Activated naive CD4-positive, alpha-beta T cell treated with anti-CD3 and anti-CD28 coated beads for 36 hours (primary cell): ENCODE measurements at regions of chr12 and their contacts with region 1.

Region 1: GRCh38 chr12:47021298-47021697 is 58.1 kb upstream of the PCED1B start:
- DNase-seq: no peak
- H3K4me3 Mint-ChIP-seq: no peak overlapping the region
- H3K27ac Mint-ChIP-seq: no peak overlapping the region
- H3K4me1 Mint-ChIP-seq: no peaks in the 10 kb centered on the region
- H3K27me3 Mint-ChIP-seq: no peaks in the 10 kb centered on the region

Region 2: DNA sequence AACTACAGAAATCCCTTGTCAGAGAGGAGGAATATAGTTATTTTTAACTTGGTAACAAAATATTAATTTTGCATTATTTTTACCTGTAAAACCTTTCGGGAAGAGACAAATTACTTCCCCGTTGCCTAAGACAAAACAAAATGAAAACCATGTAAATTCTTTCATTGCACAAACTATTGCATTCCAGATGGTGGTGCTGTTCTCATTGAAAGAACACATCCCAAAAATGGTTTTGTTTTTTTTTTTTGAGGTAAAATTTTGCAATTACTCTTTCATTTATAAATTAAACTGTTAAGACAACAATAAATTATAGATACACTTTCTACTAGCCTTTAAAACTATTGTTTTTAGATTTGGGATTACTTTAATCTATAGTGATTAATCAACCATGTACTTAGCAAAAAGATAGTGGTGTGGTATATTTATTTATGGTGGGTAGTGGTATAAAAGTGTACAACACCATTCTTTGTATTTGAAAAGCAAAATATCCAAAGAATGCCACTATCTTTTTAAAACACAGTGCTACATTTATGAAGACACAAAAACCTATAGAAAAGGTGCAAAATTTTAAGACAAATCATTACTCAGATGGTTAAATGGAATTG is 867.9 kb before region 1 on chr12:
- CTCF ChIA-PET with region 1: no interaction called
- intact Hi-C with region 1: loop called (anchors 10 kb)
- DNase-seq: no peak
- H3K4me3 Mint-ChIP-seq: no peak overlapping the region
- H3K27ac Mint-ChIP-seq: no peak overlapping the region
- H3K4me1 Mint-ChIP-seq: peaks cover 12% of the 10 kb centered on the region
- H3K27me3 Mint-ChIP-seq: peaks cover under 1% of the 10 kb centered on the region

Region 3: GRCh38 chr12:46342562-46343033 is 678.7 kb before region 1 on chr12:
- CTCF ChIA-PET with region 1: interaction called, 4 read pairs
- intact Hi-C with region 1: loop called (anchors 2 kb)
- DNase-seq: peak; percentile 48
- H3K4me3 Mint-ChIP-seq: no peak overlapping the region
- H3K27ac Mint-ChIP-seq: no peak overlapping the region
- H3K4me1 Mint-ChIP-seq: peaks cover 5% of the 10 kb centered on the region
- H3K27me3 Mint-ChIP-seq: no peaks in the 10 kb centered on the region

Region 4: GRCh38 chr12:46983393-46984266 is 37.7 kb before region 1 on chr12:
- CTCF ChIA-PET with region 1: interaction called, 18 read pairs
- intact Hi-C with region 1: no loop called
- DNase-seq: peak; percentile 55
- H3K4me3 Mint-ChIP-seq: no peak overlapping the region
- H3K27ac Mint-ChIP-seq: no peak overlapping the region
- H3K4me1 Mint-ChIP-seq: peaks cover 9% of the 10 kb centered on the region
- H3K27me3 Mint-ChIP-seq: peaks cover 5% of the 10 kb centered on the region